Left cardiac atrium (tissue), 4 donors: ENCODE measurements at regions of chr1 and their contacts with region 1.

Region 1: DNA sequence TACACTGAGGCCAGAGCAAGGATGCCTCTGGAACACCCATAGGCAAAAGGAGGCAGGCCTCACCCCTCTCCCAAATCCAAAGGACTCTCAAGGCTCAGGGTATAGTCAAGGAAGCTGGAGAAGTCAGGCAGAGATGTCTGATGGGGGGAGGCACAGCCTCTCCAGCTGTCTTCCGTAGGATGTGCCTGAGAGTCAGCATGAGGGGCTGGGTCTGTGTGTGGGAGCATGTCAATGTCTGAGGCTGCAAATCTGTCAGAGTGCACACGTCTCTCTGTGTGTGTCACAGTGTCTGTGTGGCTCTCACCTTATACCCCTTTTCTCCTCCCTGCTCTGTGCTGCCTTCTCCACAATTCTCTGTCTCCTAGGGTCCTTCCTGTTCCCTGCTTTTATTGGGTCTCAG is 4.0 kb downstream of the HPCAL4 start:
- DNase-seq: no peak
- ATAC-seq: no peak

Region 2: GRCh38 chr1:39666772-39667171 is 20.5 kb before region 1 on chr1:
- intact Hi-C with region 1: loop called in 1 of 2 experiments (anchors 2 kb)
- DNase-seq: no peak
- ATAC-seq: no peak

Region 3: GRCh38 chr1:39754906-39755504 is 67.8 kb after region 1 on chr1:
- intact Hi-C with region 1: no loop called
- DNase-seq: no peak
- ATAC-seq: peak in 1 of 2 donors; percentile 29